Activated CD8-positive, alpha-beta T cell treated with anti-CD3 and anti-CD28 coated beads, Interleukin-2, amount 10 ng/mL, durations not matched to agents 7 days and 5 days (primary cell): ENCODE measurements at regions of chr16 and their contacts with region 1.

Region 1: GRCh38 chr16:24010440-24011089 is 174.8 kb downstream of the PRKCB start:
- DNase-seq: peak; percentile 89
- ATAC-seq: peak; percentile 68
- H3K4me3 Mint-ChIP-seq: no peak overlapping the region
- H3K27ac Mint-ChIP-seq: no peak overlapping the region
- H3K4me1 Mint-ChIP-seq: peaks cover 57% of the 10 kb centered on the region
- H3K27me3 Mint-ChIP-seq: no peaks in the 10 kb centered on the region

Region 2: GRCh38 chr16:23803591-23804123 is 206.9 kb before region 1 on chr16:
- CTCF ChIA-PET with region 1: interaction called, 341 read pairs
- POLR2A ChIA-PET with region 1: interaction called, 3 read pairs
- DNase-seq: peak; percentile 85
- ATAC-seq: peak; percentile 98
- H3K4me3 Mint-ChIP-seq: no peak overlapping the region
- H3K27ac Mint-ChIP-seq: no peak overlapping the region
- H3K4me1 Mint-ChIP-seq: peaks cover 25% of the 10 kb centered on the region
- H3K27me3 Mint-ChIP-seq: peaks cover 2% of the 10 kb centered on the region

Region 3: GRCh38 chr16:23858542-23858941 is 152.0 kb before region 1 on chr16:
- CTCF ChIA-PET with region 1: interaction called, 15 read pairs
- POLR2A ChIA-PET with region 1: no interaction called
- DNase-seq: no peak
- ATAC-seq: no peak
- H3K4me3 Mint-ChIP-seq: no peak overlapping the region
- H3K27ac Mint-ChIP-seq: no peak overlapping the region
- H3K4me1 Mint-ChIP-seq: peaks cover 65% of the 10 kb centered on the region
- H3K27me3 Mint-ChIP-seq: no peaks in the 10 kb centered on the region

Region 4: GRCh38 chr16:23889189-23889588 is 121.4 kb before region 1 on chr16:
- CTCF ChIA-PET with region 1: interaction called, 18 read pairs
- POLR2A ChIA-PET with region 1: no interaction called
- DNase-seq: no peak
- ATAC-seq: no peak
- H3K4me3 Mint-ChIP-seq: no peak overlapping the region
- H3K27ac Mint-ChIP-seq: peak overlapping the region; percentile 19
- H3K4me1 Mint-ChIP-seq: peaks cover 12% of the 10 kb centered on the region
- H3K27me3 Mint-ChIP-seq: no peaks in the 10 kb centered on the region

Region 5: DNA sequence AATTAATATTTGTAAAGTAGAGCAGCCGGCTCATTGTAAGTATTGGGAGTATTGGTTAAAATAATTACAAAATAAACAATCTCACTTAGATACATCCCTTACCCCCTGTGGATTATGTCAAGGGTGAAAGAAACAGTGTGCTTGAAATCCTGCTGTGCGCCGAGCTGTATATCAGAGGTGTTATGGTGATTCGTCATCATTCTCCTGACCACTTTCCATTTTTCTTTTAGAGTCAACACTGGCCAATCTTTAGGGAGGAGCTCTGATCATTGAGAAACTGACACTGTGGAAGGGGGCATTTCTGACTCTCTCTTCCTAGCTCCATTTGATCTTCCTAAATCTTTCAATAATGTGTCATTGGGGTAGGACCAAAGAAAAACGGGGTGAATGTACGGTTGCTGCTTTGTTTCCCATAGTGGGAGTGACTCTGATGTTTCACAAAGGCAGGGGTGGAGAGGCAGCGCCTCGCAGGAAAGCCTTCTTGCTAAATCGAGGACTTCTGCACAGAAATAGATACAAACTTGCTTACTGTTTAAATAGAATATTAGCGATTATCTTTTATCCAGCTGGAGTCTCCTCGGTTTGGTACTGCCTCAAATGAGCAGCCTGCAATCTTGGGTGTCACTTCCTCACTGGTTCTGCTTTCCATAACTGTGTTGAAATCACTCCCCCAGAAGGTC is 51.4 kb before region 1 on chr16:
- CTCF ChIA-PET with region 1: interaction called, 19 read pairs
- POLR2A ChIA-PET with region 1: no interaction called
- DNase-seq: peak; percentile 20
- ATAC-seq: peak; percentile 56
- H3K4me3 Mint-ChIP-seq: peak overlapping the region; percentile 19
- H3K27ac Mint-ChIP-seq: peak overlapping the region; percentile 45
- H3K4me1 Mint-ChIP-seq: peaks cover 54% of the 10 kb centered on the region
- H3K27me3 Mint-ChIP-seq: no peaks in the 10 kb centered on the region

Region 6: DNA sequence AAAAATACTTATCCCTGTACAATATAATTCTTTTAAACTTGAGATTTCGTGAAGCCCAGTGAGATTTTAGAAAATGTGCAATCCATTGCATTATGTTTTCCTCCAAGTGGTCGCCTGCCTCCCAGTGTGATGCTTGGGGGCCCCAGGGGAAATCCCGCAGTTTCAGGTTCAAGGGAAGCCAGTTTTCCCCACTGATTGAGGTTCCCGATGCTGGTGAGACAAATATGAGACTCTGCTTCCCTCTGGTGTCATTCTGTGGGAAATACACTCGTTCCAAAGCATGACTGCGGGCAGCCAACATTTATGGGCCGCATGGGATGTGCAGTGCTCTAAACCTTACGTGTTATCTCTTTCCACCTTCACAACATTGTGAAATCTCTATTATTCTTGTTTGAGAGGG is 26.0 kb after region 1 on chr16:
- CTCF ChIA-PET with region 1: interaction called, 36 read pairs
- POLR2A ChIA-PET with region 1: interaction called, 3 read pairs
- DNase-seq: peak; percentile 47
- ATAC-seq: peak; percentile 41
- H3K4me3 Mint-ChIP-seq: peak overlapping the region; percentile 26
- H3K27ac Mint-ChIP-seq: peak overlapping the region; percentile 22
- H3K4me1 Mint-ChIP-seq: peaks cover 56% of the 10 kb centered on the region
- H3K27me3 Mint-ChIP-seq: no peaks in the 10 kb centered on the region

Region 7: DNA sequence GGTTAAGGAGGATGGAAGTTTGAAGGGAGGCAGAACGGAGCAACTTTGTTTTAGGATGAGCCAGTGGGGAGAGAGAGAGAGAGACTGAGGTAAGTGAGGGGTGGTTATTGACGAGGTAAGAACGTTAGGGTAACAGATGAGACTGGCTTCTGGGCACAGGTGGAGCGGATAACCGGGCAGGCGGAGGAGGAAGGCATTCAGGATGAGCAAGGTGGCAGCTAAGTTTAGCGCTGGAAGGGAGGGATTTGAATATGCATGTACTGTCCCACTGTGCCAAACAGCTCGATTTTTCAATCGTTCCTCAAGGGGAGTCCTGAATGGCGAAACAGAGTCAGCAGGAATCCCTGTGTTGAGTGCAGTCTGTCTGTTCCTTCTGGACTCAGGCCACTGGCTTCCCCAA is 281.4 kb after region 1 on chr16:
- CTCF ChIA-PET with region 1: no interaction called
- POLR2A ChIA-PET with region 1: no interaction called
- DNase-seq: no peak
- ATAC-seq: no peak
- H3K4me3 Mint-ChIP-seq: no peak overlapping the region
- H3K27ac Mint-ChIP-seq: no peak overlapping the region
- H3K4me1 Mint-ChIP-seq: no peaks in the 10 kb centered on the region
- H3K27me3 Mint-ChIP-seq: peaks cover 8% of the 10 kb centered on the region